HCT116 (cell line): ENCODE measurements at regions of chr21 and their contacts with region 1.

Region 1: DNA sequence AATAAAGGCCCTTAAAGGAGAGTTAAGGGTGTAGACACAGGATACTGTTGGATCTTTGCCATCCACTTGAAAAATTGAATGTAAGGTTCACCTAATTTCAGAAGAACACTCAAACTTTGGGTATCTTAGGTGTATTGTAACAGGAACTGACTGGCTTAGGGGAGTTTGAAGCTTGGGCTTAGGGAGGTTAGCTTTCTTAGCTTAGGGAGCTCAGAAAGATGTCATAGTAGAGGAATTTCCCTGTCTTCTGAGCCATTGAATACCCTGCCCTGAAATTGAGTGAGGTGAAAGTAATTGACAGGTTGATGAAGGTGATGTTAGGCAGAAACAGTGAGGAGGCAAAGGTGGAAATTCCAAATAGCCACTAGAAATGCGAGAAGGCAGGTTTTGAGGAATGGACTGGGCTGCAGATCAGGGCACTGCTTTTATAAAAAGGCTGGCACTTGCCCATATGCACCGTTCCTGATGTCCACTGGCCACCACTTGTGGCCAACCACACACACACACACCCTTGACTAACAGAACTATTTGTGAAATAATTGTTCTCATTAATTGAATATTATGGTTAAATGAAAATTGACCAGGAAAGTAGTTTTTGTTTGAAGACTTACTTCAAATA is 16.5 kb downstream of the BACH1 start:
- DNase-seq: no peak
- ATAC-seq: no peak
- H3K4me3 ChIP-seq: no peak overlapping the region
- H3K27ac ChIP-seq: no peak overlapping the region
- H3K4me1 ChIP-seq: peaks cover 0 to 3% of the 10 kb centered on the region in 2 experiments; a peak in 1 of 4 replicates
- H3K27me3 ChIP-seq: no peaks in the 10 kb centered on the region
- CTCF ChIP-seq: no peak
- POLR2A ChIP-seq: no peak
- RAD21 ChIP-seq: no peak

Region 2: GRCh38 chr21:28579986-28580550 is 735.2 kb before region 1 on chr21:
- CTCF ChIA-PET with region 1: no interaction called
- POLR2A ChIA-PET with region 1: no interaction called
- RAD21 ChIA-PET with region 1: no interaction called
- intact Hi-C with region 1: no loop called
- DNase-seq: no peak
- ATAC-seq: no peak
- H3K4me3 ChIP-seq: no peak overlapping the region
- H3K27ac ChIP-seq: no peak overlapping the region
- H3K4me1 ChIP-seq: no peaks in the 10 kb centered on the region
- H3K27me3 ChIP-seq: no peaks in the 10 kb centered on the region
- CTCF ChIP-seq: no peak
- POLR2A ChIP-seq: no peak
- RAD21 ChIP-seq: no peak

Region 3: DNA sequence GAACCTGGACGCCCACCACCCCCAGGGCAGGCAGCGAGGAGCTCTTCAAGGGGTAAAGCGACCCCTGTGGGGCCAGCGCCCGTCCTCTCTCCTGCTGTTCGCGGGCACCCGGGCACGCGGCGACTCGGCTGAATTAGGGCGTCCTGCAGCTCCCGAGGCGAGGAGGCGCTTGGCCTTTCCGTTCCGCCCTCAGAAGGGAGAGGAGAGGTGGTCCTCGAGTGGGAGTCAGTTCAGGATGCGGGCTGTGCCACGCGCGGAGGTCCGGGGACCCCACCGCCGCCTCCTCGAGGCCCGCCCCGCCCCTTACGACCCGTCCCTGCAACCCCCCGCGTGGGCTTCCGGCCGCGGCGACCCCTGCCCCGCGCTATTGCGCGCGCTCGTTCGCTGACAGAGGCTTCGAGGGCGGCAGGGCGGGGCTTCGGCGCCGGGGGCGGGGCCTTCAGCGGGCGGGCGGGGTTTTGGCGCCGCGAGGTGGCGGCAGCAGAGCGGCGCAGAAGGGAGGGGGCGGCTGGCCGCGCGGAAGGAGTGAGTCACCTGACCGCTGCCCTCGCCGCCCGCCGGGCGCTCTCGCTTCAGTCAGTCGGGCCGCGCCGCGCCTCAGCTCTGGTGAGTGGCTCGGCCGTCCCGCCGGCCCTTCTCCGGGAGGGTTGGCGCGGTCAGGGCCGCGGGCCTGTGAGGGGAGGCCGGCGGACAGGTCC is 16.7 kb before region 1 on chr21 and contains the start of gene BACH1:
- CTCF ChIA-PET with region 1: no interaction called
- POLR2A ChIA-PET with region 1: interaction called, 12 read pairs
- RAD21 ChIA-PET with region 1: no interaction called
- intact Hi-C with region 1: no loop called
- DNase-seq: peak; percentile 59
- ATAC-seq: peak; percentile 88
- H3K4me3 ChIP-seq: peak within 1 kb of the TSS; percentile 60 to 89
- H3K27ac ChIP-seq: peak within 1 kb of the TSS; percentile 67
- H3K4me1 ChIP-seq: peaks cover 10 to 21% of the 10 kb centered on the region in 2 experiments
- H3K27me3 ChIP-seq: no peaks in the 10 kb centered on the region
- CTCF ChIP-seq: peak in 1 of 3 experiments; percentile 28; a peak in 3 of 6 replicates
- POLR2A ChIP-seq: peak; percentile 61
- RAD21 ChIP-seq: 0 out of 2 replicates have a peak, but pooled peaks have one; percentile 9
- total RNA-seq, gene BACH1: 28.4 TPM

Region 4: GRCh38 chr21:29581393-29581792 is 266.2 kb after region 1 on chr21:
- CTCF ChIA-PET with region 1: no interaction called
- POLR2A ChIA-PET with region 1: no interaction called
- RAD21 ChIA-PET with region 1: no interaction called
- intact Hi-C with region 1: no loop called
- DNase-seq: no peak
- ATAC-seq: no peak
- H3K4me3 ChIP-seq: no peak overlapping the region
- H3K27ac ChIP-seq: no peak overlapping the region
- H3K4me1 ChIP-seq: no peaks in the 10 kb centered on the region
- H3K27me3 ChIP-seq: no peaks in the 10 kb centered on the region
- CTCF ChIP-seq: no peak
- POLR2A ChIP-seq: no peak
- RAD21 ChIP-seq: no peak